OCI-LY7 (cell line): ENCODE measurements at regions of chr4 and their contacts with region 1.

Region 1: GRCh38 chr4:56387023-56388001 is at the start of gene AASDH:
- DNase-seq: peak; percentile 95
- H3K4me3 ChIP-seq: peak within 1 kb of the TSS; percentile 77
- H3K27ac ChIP-seq: peak within 1 kb of the TSS; percentile 85
- H3K4me1 ChIP-seq: peaks cover 22% of the 10 kb centered on the region
- CTCF ChIP-seq: no peak
- total RNA-seq, gene AASDH: 10.4 TPM in 2 replicates

Region 2: GRCh38 chr4:55675196-55675793 is 712.0 kb before region 1 on chr4:
- CTCF ChIA-PET with region 1: no interaction called
- POLR2A ChIA-PET with region 1: no interaction called
- intact Hi-C with region 1: no loop called
- DNase-seq: no peak
- H3K4me3 ChIP-seq: no peak overlapping the region
- H3K27ac ChIP-seq: no peak overlapping the region
- H3K4me1 ChIP-seq: no peaks in the 10 kb centered on the region
- CTCF ChIP-seq: no peak

Region 3: GRCh38 chr4:56048702-56049431 is 338.4 kb before region 1 on chr4:
- CTCF ChIA-PET with region 1: no interaction called
- POLR2A ChIA-PET with region 1: interaction called, 5 read pairs
- intact Hi-C with region 1: loop called (anchors 5 kb)
- DNase-seq: peak; percentile 89
- H3K4me3 ChIP-seq: peak overlapping the region; percentile 81
- H3K27ac ChIP-seq: peak overlapping the region; percentile 72
- H3K4me1 ChIP-seq: peaks cover 31% of the 10 kb centered on the region
- CTCF ChIP-seq: no peak; the same call in 1 of the 2 replicates

Region 4: GRCh38 chr4:56311299-56312186 is 75.8 kb before region 1 on chr4:
- CTCF ChIA-PET with region 1: no interaction called
- POLR2A ChIA-PET with region 1: no interaction called
- intact Hi-C with region 1: no loop called
- DNase-seq: no peak
- H3K4me3 ChIP-seq: no peak overlapping the region
- H3K27ac ChIP-seq: no peak overlapping the region
- H3K4me1 ChIP-seq: no peaks in the 10 kb centered on the region
- CTCF ChIP-seq: no peak

Region 5: DNA sequence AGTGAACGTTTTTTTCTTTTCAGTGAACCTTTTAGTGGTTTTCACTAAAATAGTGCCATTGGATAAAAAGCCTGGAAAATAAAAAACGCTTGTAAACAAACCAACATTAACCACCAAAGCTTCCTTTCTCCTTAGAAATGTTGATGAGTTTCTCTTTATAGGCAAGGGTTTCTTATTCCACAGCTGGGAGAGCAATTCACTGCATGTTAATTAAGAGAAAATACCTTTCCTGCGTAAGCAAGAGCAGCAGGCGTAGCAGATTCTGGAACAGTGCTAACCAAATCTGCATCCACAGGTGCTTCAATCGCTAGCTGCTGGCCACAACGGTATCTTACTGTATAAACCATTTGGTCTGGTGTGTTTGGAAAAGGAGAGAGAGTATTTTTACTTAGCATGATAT is 13.2 kb after region 1 on chr4:
- CTCF ChIA-PET with region 1: no interaction called
- POLR2A ChIA-PET with region 1: interaction called, 24 read pairs
- intact Hi-C with region 1: no loop called
- DNase-seq: no peak
- H3K4me3 ChIP-seq: no peak overlapping the region
- H3K27ac ChIP-seq: no peak overlapping the region
- H3K4me1 ChIP-seq: no peaks in the 10 kb centered on the region
- CTCF ChIP-seq: no peak

Region 6: DNA sequence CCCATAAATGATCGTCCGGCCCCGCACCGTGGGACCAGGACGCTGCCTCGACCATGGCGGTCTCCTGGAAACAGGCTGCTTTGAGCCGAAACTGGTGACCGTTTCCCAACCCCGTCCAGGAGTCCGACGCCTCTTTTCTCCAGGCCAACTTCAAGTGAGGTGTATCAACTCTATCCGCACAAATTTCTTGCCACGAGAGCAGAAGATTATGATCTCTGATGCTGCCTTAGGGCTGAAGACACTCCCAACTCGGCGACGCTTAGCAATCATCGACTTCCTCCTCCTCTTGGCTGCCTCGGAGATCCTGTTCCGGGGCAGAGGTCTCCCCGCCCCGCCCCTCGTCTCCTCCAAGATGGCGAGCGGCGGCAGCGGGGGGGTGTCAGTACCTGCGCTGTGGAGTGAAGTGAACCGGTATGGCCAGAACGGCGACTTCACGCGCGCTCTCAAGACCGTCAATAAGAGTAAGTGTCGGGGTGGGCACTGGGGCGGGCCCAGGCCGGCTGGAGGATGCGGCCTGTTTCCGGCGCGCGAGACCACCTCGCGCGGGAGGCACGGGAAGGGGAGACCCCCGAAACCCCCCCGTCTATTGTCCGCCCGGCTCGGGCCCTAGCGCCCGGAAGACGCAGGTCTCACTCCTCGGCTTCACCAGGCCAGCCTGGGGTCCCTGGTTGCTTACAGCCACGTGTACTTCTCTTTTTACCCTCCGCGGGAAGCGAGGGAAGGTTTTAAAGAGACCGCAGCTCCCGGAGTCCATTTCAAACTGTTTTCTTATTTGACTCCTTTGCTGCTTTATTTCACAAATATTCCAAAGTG is 80.2 kb after region 1 on chr4 and contains the start of gene SRP72:
- CTCF ChIA-PET with region 1: no interaction called
- POLR2A ChIA-PET with region 1: interaction called, 11 read pairs
- intact Hi-C with region 1: no loop called
- DNase-seq: peak; percentile 90
- H3K4me3 ChIP-seq: peak within 1 kb of the TSS; percentile 99
- H3K27ac ChIP-seq: peak within 1 kb of the TSS; percentile 83
- H3K4me1 ChIP-seq: peaks cover 36% of the 10 kb centered on the region
- CTCF ChIP-seq: no peak
- total RNA-seq, gene SRP72: 53.5 and 65.8 TPM in 2 replicates

Region 7: DNA sequence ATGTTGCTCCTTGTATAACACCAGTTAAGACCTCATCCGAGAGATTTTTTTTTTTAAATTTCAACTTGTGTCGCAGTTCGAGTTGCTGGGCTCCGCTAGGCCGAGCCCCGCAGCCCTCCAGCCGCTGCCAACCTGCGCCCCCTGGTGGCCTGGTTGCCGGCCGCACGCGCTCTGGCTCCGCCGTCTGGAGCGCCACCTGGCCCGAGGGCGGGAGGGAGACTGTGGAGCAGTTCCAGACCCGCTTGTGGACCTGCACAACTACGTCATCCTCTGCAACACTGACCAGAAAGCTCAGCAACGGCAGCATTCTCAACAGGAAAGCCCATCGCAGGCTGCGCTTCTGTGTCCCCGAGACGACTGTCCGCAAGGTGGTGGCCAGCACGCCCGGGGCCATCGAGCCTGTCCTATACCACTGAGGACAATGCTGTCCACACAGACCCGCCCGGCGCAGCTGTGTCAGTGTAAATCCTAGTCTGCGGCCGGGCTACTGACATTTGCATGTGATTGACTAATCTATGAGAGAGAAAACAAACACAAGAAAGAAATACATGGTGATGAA is 157.3 kb after region 1 on chr4:
- CTCF ChIA-PET with region 1: no interaction called
- POLR2A ChIA-PET with region 1: no interaction called
- intact Hi-C with region 1: loop called (anchors 1 kb)
- DNase-seq: peak; percentile 68
- H3K4me3 ChIP-seq: peak overlapping the region; percentile 56
- H3K27ac ChIP-seq: no peak overlapping the region
- H3K4me1 ChIP-seq: peaks cover 4% of the 10 kb centered on the region
- CTCF ChIP-seq: peak; percentile 95

Region 8: DNA sequence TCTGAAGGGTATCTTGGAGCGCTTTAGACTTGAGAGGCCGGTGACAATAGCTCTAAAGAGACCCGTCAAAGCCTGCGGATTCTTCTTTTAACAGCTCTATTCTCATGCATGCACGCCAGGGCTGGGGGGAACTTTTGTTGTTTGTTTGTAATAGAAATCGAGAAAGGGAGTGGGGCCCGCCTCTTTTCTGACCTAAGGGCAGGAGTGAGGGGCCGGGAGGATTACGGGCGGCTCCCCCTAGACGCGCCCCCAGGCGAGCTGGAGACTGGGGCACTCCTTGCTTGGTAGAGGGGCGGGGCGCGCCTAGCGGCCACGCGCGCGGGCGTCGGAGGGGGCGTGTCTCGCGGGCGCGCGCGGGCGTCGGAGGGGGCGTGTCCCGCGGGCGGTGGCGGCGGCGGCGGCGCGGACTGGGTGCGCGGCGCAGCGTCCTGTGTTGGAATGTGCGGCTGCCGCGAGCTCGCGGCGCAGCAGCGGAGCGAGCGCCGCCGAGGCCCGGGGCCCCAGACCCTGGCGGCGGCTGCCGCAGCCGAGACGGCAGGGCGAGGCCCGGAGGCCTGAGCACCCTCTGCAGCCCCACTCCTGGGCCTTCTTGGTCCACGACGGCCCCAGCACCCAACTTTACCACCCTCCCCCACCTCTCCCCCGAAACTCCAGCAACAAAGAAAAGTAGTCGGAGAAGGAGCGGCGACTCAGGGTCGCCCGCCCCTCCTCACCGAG is 520.3 kb after region 1 on chr4 and contains the start of gene REST:
- CTCF ChIA-PET with region 1: no interaction called
- POLR2A ChIA-PET with region 1: interaction called, 3 read pairs
- intact Hi-C with region 1: loop called (anchors 5 kb)
- DNase-seq: peak; percentile 86
- H3K4me3 ChIP-seq: peak within 1 kb of the TSS; percentile 84
- H3K27ac ChIP-seq: peak within 1 kb of the TSS; percentile 89
- H3K4me1 ChIP-seq: peaks cover 37% of the 10 kb centered on the region
- CTCF ChIP-seq: no peak
- total RNA-seq, gene REST: 26.7 and 27.3 TPM in 2 replicates

Region 9: DNA sequence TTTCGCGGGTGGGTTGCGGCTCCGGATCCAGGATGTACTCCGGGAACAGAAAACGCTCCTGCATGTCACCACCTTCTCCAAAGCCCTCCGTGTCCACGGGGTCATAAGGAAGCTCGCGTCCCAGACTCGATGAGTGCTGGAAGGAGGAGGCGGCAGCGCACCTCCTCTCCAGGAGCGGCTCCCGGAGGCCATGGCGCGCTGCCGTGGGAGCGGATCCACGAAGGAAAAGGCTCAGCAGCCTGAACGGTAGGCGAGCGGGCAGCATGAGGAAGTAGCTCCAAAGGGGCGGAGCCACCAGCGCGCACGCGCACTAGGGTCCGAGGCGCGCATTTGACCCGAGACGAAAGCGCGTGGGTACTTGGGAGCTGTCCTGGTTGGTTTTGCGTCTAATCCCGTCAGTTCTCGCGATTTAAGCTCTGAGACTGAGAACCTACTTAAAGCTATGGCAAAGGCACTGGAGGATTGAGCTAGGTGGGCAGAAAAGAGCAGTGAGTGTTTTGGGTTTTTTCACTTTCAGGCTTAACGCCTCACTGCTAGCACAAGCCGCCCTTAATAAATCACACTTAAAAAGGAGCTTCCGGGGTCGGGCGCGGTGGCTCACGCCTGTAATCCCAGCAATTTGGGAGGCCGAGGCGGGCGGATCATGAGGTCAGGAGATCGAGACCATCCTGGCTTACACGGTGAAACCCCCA is 590.2 kb after region 1 on chr4 and contains the start of gene NOA1:
- CTCF ChIA-PET with region 1: no interaction called
- POLR2A ChIA-PET with region 1: interaction called, 4 read pairs
- intact Hi-C with region 1: loop called (anchors 10 kb)
- DNase-seq: peak; percentile 99
- H3K4me3 ChIP-seq: peak within 1 kb of the TSS; percentile 98
- H3K27ac ChIP-seq: peak within 1 kb of the TSS; percentile 87
- H3K4me1 ChIP-seq: peaks cover 33% of the 10 kb centered on the region
- CTCF ChIP-seq: no peak
- total RNA-seq, gene NOA1: 20.2 TPM in 2 replicates